HEK293 (cell line): ENCODE measurements at regions of chr1 and their contacts with region 1.

Region 1: GRCh38 chr1:154183045-154183915 is 8.6 kb downstream of the TPM3 start:
- H3K4me3 ChIP-seq: peak overlapping the region; percentile 96
- H3K27ac ChIP-seq: peak overlapping the region; percentile 78
- H3K4me1 ChIP-seq: peaks cover 28% of the 10 kb centered on the region
- CTCF ChIP-seq: no peak

Region 2: GRCh38 chr1:154220071-154220969 is 37.0 kb after region 1 on chr1 and contains the start of gene UBAP2L:
- CTCF ChIA-PET with region 1: interaction called, 4 read pairs
- POLR2A ChIA-PET with region 1: interaction called, 14 read pairs
- H3K4me3 ChIP-seq: peak within 1 kb of the TSS; percentile 87
- H3K27ac ChIP-seq: peak within 1 kb of the TSS; percentile 96
- H3K4me1 ChIP-seq: no peaks in the 10 kb centered on the region
- CTCF ChIP-seq: peak; percentile 21; the same call in 1 of the 2 replicates